ENCODE measurements at regions of chr15 and their contacts with region 1.

Region 1: DNA sequence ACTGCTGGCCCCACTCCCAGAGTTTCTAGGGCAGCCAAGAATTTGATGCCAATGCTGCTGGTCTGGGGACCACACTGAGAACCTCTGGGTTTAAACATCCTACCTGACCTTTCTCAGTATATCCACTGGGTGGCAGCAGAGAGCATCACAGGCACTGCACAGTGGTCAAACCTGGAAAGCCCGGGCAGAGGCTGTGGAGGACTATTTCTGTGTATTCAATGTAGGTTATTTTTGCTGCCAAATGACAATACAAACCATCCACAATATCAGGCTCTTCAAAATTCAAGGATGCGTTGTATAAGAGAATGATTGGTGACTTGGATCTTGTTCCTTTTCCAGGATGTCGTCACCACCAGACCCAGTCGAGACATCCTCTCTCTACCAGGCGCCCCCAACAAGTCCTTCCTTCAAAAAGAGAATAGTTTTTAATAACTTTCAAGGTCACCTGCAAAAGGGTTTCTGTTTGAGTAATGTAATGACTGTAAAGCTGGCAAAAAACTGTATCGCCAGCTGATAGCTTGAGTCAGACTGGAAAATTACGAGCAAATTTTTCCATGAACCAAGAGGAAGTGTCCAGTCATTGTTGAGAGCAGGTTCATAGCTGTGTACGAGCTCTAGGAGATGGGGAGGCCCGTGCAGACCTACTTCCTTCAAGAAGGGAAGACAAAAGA is 30.5 kb upstream of the MYZAP start:
- DNase-seq: peak; percentile 74
- H3K4me3 Mint-ChIP-seq: no peak overlapping the region
- H3K27ac Mint-ChIP-seq: no peak overlapping the region
- H3K4me1 Mint-ChIP-seq: peaks cover 46% of the 10 kb centered on the region
- H3K27me3 Mint-ChIP-seq: peaks cover 7% of the 10 kb centered on the region

Region 2: DNA sequence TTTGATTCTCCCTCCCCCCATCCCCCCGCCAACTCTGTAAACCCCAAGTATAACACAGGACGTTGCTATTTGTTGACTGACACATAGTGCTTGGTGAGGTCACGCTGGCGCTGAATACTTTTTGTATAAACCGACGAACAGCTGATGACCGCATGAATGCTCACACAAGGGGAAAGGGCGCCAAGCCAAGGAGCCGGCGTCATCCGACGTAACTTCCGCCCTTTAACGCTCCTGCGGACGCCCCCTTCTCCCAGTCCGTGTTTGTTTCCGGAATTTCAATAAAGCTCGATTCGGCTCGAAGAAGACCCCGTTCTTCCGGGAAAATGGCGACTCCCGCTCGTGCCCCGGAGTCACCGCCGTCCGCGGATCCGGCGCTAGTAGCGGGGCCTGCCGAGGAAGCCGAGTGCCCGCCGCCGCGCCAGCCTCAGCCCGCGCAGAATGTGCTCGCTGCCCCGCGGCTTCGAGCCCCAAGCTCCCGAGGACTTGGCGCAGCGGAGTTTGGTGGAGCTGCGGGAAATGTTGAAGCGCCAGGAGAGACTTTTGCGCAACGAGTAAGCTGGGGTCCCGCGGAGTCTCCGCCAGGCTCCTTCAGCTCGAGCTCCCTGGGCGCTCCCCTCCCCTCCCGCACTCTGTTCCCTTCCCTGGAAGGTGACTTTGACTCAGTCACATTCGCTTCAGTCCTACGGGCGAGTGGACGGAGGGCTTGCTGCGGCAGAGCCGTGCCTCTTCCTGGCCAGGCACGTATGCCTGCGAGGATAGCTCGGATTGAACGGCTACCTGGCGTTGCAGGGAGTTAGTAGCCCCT is 145.4 kb after region 1 on chr15 and contains the start of gene POLR2M:
- CTCF ChIA-PET with region 1: interaction called, 11 read pairs
- DNase-seq: peak; percentile 93
- H3K4me3 Mint-ChIP-seq: peak within 1 kb of the TSS; percentile 83
- H3K27ac Mint-ChIP-seq: peak within 1 kb of the TSS; percentile 83
- H3K4me1 Mint-ChIP-seq: peaks cover 86% of the 10 kb centered on the region
- H3K27me3 Mint-ChIP-seq: no peaks in the 10 kb centered on the region

Region 3: DNA sequence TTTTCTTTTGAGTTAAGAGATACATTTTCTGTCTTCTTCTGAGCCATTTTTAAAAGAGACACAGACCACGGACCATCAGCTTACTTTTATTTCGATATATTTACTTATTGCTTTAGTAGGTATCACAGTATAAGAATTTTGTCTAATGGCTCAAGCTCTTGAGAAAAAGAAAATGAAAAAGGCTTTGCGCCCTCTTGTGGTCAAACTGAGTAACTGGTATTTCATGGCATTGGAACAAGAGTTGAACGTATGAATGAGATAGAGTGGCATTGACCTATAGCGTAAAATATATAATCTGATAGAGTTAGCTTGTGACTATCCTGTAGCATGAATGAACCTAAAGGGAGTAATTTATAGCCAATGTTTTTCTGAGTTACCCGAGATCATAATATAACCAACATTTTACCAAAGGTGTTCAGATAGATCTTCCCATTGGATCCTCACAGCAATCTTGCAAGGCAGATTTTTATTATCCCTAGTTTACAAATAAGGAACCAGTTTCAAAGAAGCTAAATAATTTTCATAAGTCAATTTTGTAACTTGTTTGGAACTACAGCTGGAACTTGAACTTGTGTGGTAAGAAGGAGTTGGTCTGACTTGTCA is 300.0 kb after region 1 on chr15:
- CTCF ChIA-PET with region 1: interaction called, 34 read pairs
- DNase-seq: peak; percentile 46
- H3K4me3 Mint-ChIP-seq: no peak overlapping the region
- H3K27ac Mint-ChIP-seq: no peak overlapping the region
- H3K4me1 Mint-ChIP-seq: peaks cover 15% of the 10 kb centered on the region
- H3K27me3 Mint-ChIP-seq: peaks cover 30% of the 10 kb centered on the region